Activated CD4-positive, alpha-beta T cell treated with anti-CD3 and anti-CD28 coated beads for 36 hours (primary cell): ENCODE measurements at regions of chr1 and their contacts with region 1.

Region 1: GRCh38 chr1:32247983-32248889 is 1.2 kb downstream of the FAM167B start:
- DNase-seq: peak; percentile 91
- ATAC-seq: peak; percentile 11
- H3K4me3 Mint-ChIP-seq: peak overlapping the region; percentile 33
- H3K27ac Mint-ChIP-seq: peak overlapping the region; percentile 100
- H3K4me1 Mint-ChIP-seq: peaks cover 44% of the 10 kb centered on the region
- H3K27me3 Mint-ChIP-seq: no peaks in the 10 kb centered on the region

Region 2: DNA sequence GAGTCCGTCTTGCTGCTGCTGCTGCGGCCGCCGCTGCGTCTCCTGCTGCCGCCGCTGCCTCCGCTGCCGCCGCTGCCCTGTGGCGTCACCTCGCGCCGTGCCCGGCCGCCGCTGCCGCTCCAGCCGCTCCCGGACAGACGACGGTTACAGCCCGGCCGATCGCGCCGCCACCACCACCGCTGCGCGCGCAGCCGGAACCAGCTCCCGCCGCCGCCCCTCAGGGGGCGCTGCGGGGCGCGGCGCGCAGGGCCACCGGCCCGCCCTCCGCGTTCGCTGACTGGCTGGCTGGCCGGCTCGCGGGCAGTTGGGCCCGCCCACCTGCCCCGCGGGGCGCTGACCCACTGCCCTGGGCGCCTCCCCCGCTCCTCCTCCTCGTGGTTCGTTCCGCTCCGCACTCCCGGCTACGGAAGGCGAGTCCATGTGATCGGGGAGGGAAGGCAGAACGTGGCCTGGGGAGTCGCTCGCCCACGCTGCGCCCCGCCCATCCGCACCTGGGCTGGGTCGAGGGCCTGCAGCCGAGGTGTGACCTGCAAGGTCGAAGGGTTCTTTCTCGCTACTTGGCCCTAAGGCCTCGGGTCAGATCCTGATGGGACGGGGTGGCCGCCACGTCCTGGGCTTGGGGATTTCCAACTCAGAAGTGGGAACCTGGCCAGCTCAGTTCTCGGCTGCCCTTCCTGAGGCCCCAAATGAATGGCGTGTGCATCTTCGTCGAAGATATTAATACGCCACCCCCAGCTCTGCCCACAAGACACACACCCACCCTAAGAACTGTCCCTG is 309.9 kb before region 1 on chr1 and contains the start of gene PTP4A2:
- CTCF ChIA-PET with region 1: no interaction called
- POLR2A ChIA-PET with region 1: interaction called, 3 read pairs
- intact Hi-C with region 1: loop called in 1 of 2 experiments (anchors 5 kb)
- DNase-seq: peak; percentile 93
- ATAC-seq: peak; percentile 63
- H3K4me3 Mint-ChIP-seq: peak within 1 kb of the TSS; percentile 91
- H3K27ac Mint-ChIP-seq: peak within 1 kb of the TSS; percentile 99
- H3K4me1 Mint-ChIP-seq: peaks cover 63% of the 10 kb centered on the region
- H3K27me3 Mint-ChIP-seq: no peaks in the 10 kb centered on the region
- total RNA-seq, gene PTP4A2: 279 to 314 TPM

Region 3: GRCh38 chr1:32045772-32046171 is 202.5 kb before region 1 on chr1:
- CTCF ChIA-PET with region 1: no interaction called
- POLR2A ChIA-PET with region 1: no interaction called
- intact Hi-C with region 1: no loop called
- DNase-seq: no peak
- ATAC-seq: no peak
- H3K4me3 Mint-ChIP-seq: no peak overlapping the region
- H3K27ac Mint-ChIP-seq: no peak overlapping the region
- H3K4me1 Mint-ChIP-seq: peaks cover 4% of the 10 kb centered on the region
- H3K27me3 Mint-ChIP-seq: no peaks in the 10 kb centered on the region

Region 4: DNA sequence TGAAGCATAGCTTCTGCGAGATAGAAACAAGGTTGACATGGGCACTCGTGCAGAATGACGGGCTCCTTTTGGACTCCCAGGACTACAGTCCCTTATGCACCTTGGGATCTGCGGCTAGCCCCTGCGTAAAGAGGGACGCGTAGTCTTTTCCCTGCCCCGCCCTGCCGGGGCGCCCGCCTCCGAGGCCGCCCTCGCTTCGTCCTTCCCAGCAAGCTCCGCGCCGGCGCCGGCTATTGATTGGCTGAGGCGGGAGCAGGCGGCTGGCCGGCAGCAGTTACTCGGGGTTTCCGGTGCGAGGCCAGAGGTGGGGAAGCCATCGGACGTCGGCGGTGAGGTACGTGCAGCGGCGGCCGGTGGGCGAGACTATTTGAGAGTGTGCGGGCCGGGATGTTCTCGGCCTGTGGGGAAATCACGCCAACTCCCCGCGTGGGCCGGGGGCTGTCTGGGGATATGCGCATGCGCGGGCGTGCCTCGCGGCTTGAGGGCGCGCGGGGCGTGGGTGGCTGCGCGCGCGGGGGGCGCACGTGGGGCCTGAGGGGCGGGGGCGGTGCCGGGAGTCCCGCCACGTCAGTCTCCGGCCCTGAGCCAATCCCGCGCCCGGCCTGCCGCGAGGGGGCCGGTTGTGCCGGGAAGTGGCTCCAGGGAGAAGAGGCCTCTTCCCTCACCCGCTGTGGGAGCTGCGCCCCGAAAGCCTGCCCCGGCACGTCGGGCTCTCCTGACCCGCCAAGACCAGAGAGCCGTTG is 68.6 kb before region 1 on chr1 and contains the start of gene TXLNA:
- CTCF ChIA-PET with region 1: interaction called, 6 read pairs
- POLR2A ChIA-PET with region 1: no interaction called
- intact Hi-C with region 1: loop called in 1 of 2 experiments (anchors 2 kb)
- DNase-seq: peak; percentile 96
- ATAC-seq: peak; percentile 93
- H3K4me3 Mint-ChIP-seq: peak within 1 kb of the TSS; percentile 86
- H3K27ac Mint-ChIP-seq: peak within 1 kb of the TSS; percentile 98
- H3K4me1 Mint-ChIP-seq: peaks cover 44% of the 10 kb centered on the region
- H3K27me3 Mint-ChIP-seq: no peaks in the 10 kb centered on the region
- total RNA-seq, gene TXLNA: 79.5 to 79.7 TPM

Region 5: GRCh38 chr1:32221980-32222755 is 26.1 kb before region 1 on chr1 and contains the starts of genes EIF3I and TMEM234:
- CTCF ChIA-PET with region 1: interaction called, 18 read pairs
- POLR2A ChIA-PET with region 1: interaction called, 5 read pairs
- intact Hi-C with region 1: loop called (anchors 1 kb)
- DNase-seq: peak; percentile 95
- ATAC-seq: peak; percentile 95
- H3K4me3 Mint-ChIP-seq: peak within 1 kb of the TSS; percentile 96
- H3K27ac Mint-ChIP-seq: peak within 1 kb of the TSS; percentile 97
- H3K4me1 Mint-ChIP-seq: peaks cover 29% of the 10 kb centered on the region
- H3K27me3 Mint-ChIP-seq: no peaks in the 10 kb centered on the region
- total RNA-seq, gene EIF3I: 299 to 349 TPM
- total RNA-seq, gene TMEM234: 7.3 to 8.2 TPM

Region 6: GRCh38 chr1:32321712-32322291 is 73.6 kb after region 1 on chr1:
- CTCF ChIA-PET with region 1: interaction called, 3 read pairs
- POLR2A ChIA-PET with region 1: no interaction called
- intact Hi-C with region 1: loop called in 1 of 2 experiments (anchors 5 kb)
- DNase-seq: peak; percentile 36
- ATAC-seq: peak; percentile 76
- H3K4me3 Mint-ChIP-seq: peak overlapping the region; percentile 45
- H3K27ac Mint-ChIP-seq: peak overlapping the region; percentile 92
- H3K4me1 Mint-ChIP-seq: peaks cover 39% of the 10 kb centered on the region
- H3K27me3 Mint-ChIP-seq: no peaks in the 10 kb centered on the region

Region 7: DNA sequence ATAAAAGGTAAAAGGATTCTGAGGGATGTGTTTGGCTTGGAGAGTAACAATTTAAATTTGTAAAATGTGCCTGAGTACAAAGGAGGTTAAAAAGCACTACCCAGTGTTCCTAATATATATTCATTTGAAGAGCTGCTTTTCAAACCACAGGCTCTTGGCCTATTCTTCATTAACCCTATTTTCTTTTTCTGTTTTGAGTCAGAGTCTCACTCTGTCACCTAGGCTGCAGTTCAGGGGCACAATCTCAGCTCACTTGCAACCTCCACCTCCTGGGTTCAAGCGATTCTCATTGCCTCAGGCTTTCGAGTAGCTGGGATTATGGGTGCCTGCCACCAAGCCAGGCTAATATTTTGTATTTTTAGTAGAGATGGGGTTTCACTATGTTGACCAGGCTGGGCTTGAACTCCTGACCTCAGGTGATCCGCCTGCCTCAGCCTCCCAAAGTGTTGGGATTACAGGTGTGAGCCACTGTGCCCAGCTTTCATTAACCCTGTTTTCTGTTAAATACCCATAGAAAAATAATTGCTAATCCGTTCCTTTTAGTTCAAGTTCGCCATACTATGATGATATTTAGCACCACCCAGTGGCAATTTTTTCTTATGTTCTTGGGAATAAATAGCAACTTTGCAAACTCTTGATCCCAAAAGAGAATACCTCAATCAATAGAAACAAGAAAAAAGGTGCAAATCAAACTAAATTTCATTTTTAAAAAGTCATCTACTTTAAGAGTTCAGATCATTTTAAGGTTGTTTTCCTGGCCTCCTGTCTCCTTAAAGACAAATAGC is 371.7 kb after region 1 on chr1:
- CTCF ChIA-PET with region 1: no interaction called
- POLR2A ChIA-PET with region 1: no interaction called
- intact Hi-C with region 1: loop called in 1 of 2 experiments (anchors 10 kb)
- DNase-seq: peak; percentile 23
- ATAC-seq: no peak
- H3K4me3 Mint-ChIP-seq: no peak overlapping the region
- H3K27ac Mint-ChIP-seq: no peak overlapping the region
- H3K4me1 Mint-ChIP-seq: peaks cover 34% of the 10 kb centered on the region
- H3K27me3 Mint-ChIP-seq: no peaks in the 10 kb centered on the region